ENCODE measurements at regions of chr4 and their contacts with region 1.

Region 1: DNA sequence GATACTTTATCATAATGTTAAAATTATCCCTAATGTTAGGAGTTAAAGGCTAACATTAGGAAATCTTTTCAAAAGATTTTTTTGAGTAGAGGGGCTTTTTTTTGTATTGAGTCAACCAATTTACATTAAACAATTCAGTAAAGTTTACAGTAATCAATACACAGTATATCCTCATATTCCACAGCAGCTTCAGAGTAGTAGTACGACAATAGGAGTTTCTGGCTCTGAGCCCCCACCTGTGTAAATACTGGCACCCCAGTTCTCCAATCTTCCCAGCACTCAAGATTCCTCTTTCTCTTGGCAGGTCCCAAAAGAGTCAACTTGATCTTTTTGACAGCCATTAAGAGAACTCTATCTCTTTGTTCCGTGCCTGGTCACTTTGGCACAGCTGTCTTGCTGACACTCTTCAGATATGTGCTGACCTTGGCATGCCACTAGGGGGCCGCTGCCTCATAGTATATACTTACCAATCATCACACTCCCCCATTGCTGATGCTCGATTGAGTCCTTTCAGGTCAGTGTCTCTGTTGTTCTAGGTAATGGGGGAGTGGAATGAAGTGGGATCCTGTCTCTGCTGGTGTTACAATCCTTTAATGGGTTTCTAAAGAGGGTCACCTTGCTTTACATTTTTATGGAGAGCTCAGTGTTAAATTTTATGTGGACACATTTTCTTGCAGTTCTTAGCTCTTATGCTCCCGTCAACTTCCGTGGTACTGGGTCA is 19.5 kb upstream of the CCNI start:
- DNase-seq: peak; percentile 77
- ATAC-seq: peak; percentile 99
- H3K4me3 Mint-ChIP-seq: no peak overlapping the region
- H3K27ac Mint-ChIP-seq: no peak overlapping the region
- H3K4me1 Mint-ChIP-seq: peaks cover 8% of the 10 kb centered on the region
- H3K27me3 Mint-ChIP-seq: no peaks in the 10 kb centered on the region
- CTCF ChIP-seq: peak; percentile 82

Region 2: DNA sequence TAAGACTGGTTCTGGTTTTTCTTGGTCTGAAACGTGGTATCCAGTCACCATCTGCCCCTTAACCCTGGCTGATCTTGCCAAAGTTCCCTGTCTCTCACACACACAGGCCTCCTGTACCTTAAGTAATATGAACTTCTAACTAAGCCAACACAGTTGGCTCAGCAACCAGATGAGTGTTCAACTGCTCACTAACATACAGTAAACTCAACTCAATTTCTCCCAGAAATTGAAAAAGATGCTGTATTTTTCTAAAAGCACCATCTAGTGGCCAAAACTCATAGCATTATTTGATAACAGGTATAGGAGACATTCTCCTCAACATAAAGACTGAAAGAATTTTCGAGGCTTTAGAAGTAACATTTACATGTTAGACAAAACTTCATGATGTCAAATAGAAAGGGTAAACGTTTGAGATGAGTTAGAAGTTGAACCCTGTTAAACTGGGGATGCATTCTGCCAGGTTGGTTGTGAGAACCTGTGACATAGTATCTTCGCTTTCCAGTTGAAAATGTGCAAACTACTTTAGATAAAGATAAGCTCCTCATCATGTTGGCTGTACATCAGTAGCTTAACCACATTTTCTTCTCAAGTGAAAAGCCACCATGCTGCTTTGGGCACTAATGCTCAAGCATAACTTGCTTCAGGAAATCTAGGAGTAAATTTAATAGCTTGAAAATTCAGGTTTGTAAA is 50.7 kb before region 1 on chr4:
- CTCF ChIA-PET with region 1: interaction called, 10 read pairs
- POLR2A ChIA-PET with region 1: no interaction called
- DNase-seq: no peak
- ATAC-seq: no peak
- H3K4me3 Mint-ChIP-seq: no peak overlapping the region
- H3K27ac Mint-ChIP-seq: no peak overlapping the region
- H3K4me1 Mint-ChIP-seq: peaks cover 13% of the 10 kb centered on the region
- H3K27me3 Mint-ChIP-seq: no peaks in the 10 kb centered on the region
- CTCF ChIP-seq: no peak

Region 3: GRCh38 chr4:77052352-77052751 is 42.9 kb before region 1 on chr4:
- CTCF ChIA-PET with region 1: interaction called, 11 read pairs
- POLR2A ChIA-PET with region 1: no interaction called
- DNase-seq: peak; percentile 89
- ATAC-seq: peak; percentile 89
- H3K4me3 Mint-ChIP-seq: no peak overlapping the region
- H3K27ac Mint-ChIP-seq: peak overlapping the region; percentile 82
- H3K4me1 Mint-ChIP-seq: peaks cover 7% of the 10 kb centered on the region
- H3K27me3 Mint-ChIP-seq: no peaks in the 10 kb centered on the region
- CTCF ChIP-seq: peak; percentile 59

Region 4: GRCh38 chr4:77075869-77076799 is 19.1 kb before region 1 on chr4 and contains the start of gene CCNI:
- CTCF ChIA-PET with region 1: interaction called, 17 read pairs
- POLR2A ChIA-PET with region 1: interaction called, 5 read pairs
- DNase-seq: peak; percentile 97
- ATAC-seq: peak; percentile 84
- H3K4me3 Mint-ChIP-seq: peak within 1 kb of the TSS; percentile 96
- H3K27ac Mint-ChIP-seq: peak within 1 kb of the TSS; percentile 100
- H3K4me1 Mint-ChIP-seq: peaks cover 28% of the 10 kb centered on the region
- H3K27me3 Mint-ChIP-seq: no peaks in the 10 kb centered on the region
- CTCF ChIP-seq: no peak
- total RNA-seq, gene CCNI: 213 to 253 TPM (median 248 TPM) in 3 replicates

Region 5: DNA sequence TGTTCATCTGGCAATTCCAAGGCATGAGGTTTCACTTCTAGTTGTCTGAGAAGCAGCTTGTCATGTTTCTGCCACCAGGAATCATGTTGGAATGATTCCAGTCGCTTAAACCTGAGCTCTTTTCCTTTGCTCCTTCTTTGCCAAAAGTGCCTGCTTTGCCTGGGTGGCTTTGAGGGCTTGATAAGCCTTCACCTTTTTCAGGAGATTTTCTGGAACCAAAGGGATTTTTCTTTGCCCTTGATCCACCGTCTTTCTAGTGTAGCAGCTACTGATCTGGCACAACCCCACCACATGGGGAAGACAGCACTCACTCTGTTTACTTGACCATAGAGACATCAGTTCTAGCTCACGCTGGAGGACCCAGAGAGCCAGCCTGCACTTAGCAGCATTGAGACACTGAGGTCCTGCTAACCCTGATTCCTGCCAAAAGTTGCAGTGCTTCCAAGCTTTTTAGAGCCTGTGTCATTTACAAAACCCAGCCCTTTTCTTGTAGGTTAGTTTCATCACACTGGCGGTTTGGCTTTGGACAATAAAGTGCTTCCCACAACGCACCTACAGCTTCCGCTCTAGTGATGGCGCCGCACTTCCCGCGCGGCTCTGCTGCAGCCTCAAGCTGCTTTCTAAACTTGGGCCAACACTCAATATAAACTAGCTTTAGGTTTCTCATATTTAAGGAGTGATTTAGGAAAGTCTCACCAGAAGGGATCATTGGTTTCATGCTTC is 12.2 kb before region 1 on chr4:
- CTCF ChIA-PET with region 1: interaction called, 26 read pairs
- POLR2A ChIA-PET with region 1: no interaction called
- DNase-seq: no peak
- ATAC-seq: peak; percentile 62
- H3K4me3 Mint-ChIP-seq: no peak overlapping the region
- H3K27ac Mint-ChIP-seq: no peak overlapping the region
- H3K4me1 Mint-ChIP-seq: peaks cover 10% of the 10 kb centered on the region
- H3K27me3 Mint-ChIP-seq: 0 out of 2 replicates have a peak, but pooled peaks cover 2% of the 10 kb centered on the region
- CTCF ChIP-seq: no peak

Region 6: GRCh38 chr4:77120886-77121508 is 25.7 kb after region 1 on chr4:
- CTCF ChIA-PET with region 1: interaction called, 12 read pairs
- POLR2A ChIA-PET with region 1: no interaction called
- DNase-seq: no peak
- ATAC-seq: peak; percentile 90
- H3K4me3 Mint-ChIP-seq: no peak overlapping the region
- H3K27ac Mint-ChIP-seq: no peak overlapping the region
- H3K4me1 Mint-ChIP-seq: peaks cover 33% of the 10 kb centered on the region
- H3K27me3 Mint-ChIP-seq: peaks cover 3% of the 10 kb centered on the region
- CTCF ChIP-seq: no peak

Measured in WTC11 (cell line).